ENCODE measurements at regions of chr2 and their contacts with region 1.

Region 1: GRCh38 chr2:203706403-203706802 is at the start of gene CD28:
- DNase-seq: peak; percentile 79 to 97 (median 89)
- ATAC-seq: peak; percentile 81
- H3K4me3 ChIP-seq: peak within 1 kb of the TSS; percentile 63 to 64
- H3K4me3 Mint-ChIP-seq: peak within 1 kb of the TSS; percentile 93
- H3K27ac ChIP-seq: peak within 1 kb of the TSS; percentile 82 to 83
- H3K27ac Mint-ChIP-seq: peak within 1 kb of the TSS; percentile 97
- H3K4me1 ChIP-seq: peaks cover 45% of the 10 kb centered on the region
- H3K4me1 Mint-ChIP-seq: peaks cover 53% of the 10 kb centered on the region
- H3K27me3 ChIP-seq: peaks cover 0 to 2% of the 10 kb centered on the region in 2 experiments
- H3K27me3 Mint-ChIP-seq: no peaks in the 10 kb centered on the region
- CTCF ChIP-seq: no peak
- total RNA-seq, gene CD28: 78.4 to 80.7 TPM

Region 2: GRCh38 chr2:203484266-203485112 is 221.9 kb before region 1 on chr2:
- CTCF ChIA-PET with region 1: interaction called, 4 read pairs
- POLR2A ChIA-PET with region 1: no interaction called
- intact Hi-C with region 1: loop called in 1 of 2 experiments (anchors 10 kb)
- DNase-seq: peak; percentile 27 to 77 (median 48)
- ATAC-seq: peak; percentile 88
- H3K4me3 ChIP-seq: no peak overlapping the region
- H3K4me3 Mint-ChIP-seq: no peak overlapping the region
- H3K27ac ChIP-seq: no peak overlapping the region
- H3K27ac Mint-ChIP-seq: no peak overlapping the region
- H3K4me1 ChIP-seq: peaks cover 4% of the 10 kb centered on the region
- H3K4me1 Mint-ChIP-seq: peaks cover 7% of the 10 kb centered on the region
- H3K27me3 ChIP-seq: no peaks in the 10 kb centered on the region
- H3K27me3 Mint-ChIP-seq: no peaks in the 10 kb centered on the region
- CTCF ChIP-seq: peak; percentile 83

Region 3: DNA sequence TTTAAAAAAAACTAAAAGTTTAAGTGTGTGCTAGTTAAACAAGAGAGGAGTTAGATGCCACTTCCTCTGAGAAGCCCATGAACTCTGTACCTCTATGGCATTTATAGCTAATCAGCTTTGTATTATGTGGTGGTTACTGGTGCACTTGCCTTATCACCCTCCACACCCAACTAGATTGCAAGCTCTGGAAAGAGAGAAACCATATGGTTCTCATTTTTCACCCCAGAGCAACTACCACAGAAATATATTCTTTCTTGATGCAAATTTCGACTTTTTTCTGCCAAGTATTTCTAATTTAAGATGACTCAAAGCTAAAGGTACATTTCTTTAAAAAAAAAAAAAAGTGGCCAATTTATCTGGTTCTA is 195.5 kb before region 1 on chr2:
- CTCF ChIA-PET with region 1: no interaction called
- POLR2A ChIA-PET with region 1: no interaction called
- intact Hi-C with region 1: no loop called
- DNase-seq: no peak
- ATAC-seq: no peak
- H3K4me3 ChIP-seq: no peak overlapping the region
- H3K4me3 Mint-ChIP-seq: no peak overlapping the region
- H3K27ac ChIP-seq: no peak overlapping the region
- H3K27ac Mint-ChIP-seq: no peak overlapping the region
- H3K4me1 ChIP-seq: no peaks in the 10 kb centered on the region
- H3K4me1 Mint-ChIP-seq: no peaks in the 10 kb centered on the region
- H3K27me3 ChIP-seq: no peaks in the 10 kb centered on the region
- H3K27me3 Mint-ChIP-seq: no peaks in the 10 kb centered on the region
- CTCF ChIP-seq: no peak

Region 4: GRCh38 chr2:203718087-203718486 is 11.7 kb after region 1 on chr2:
- CTCF ChIA-PET with region 1: interaction called, 35 read pairs
- POLR2A ChIA-PET with region 1: interaction called, 119 read pairs
- intact Hi-C with region 1: loop called (anchors 1 kb)
- DNase-seq: peak in 7 of 9 experiments; percentile 42 to 83 (median 68)
- ATAC-seq: peak; percentile 42
- H3K4me3 ChIP-seq: peak overlapping the region in 1 of 2 experiments; percentile 10
- H3K4me3 Mint-ChIP-seq: peak overlapping the region; percentile 59
- H3K27ac ChIP-seq: peak overlapping the region; percentile 39 to 57
- H3K27ac Mint-ChIP-seq: peak overlapping the region; percentile 95
- H3K4me1 ChIP-seq: peaks cover 98% of the 10 kb centered on the region
- H3K4me1 Mint-ChIP-seq: peaks cover 98% of the 10 kb centered on the region
- H3K27me3 ChIP-seq: no peaks in the 10 kb centered on the region
- H3K27me3 Mint-ChIP-seq: no peaks in the 10 kb centered on the region
- CTCF ChIP-seq: no peak

Region 5: DNA sequence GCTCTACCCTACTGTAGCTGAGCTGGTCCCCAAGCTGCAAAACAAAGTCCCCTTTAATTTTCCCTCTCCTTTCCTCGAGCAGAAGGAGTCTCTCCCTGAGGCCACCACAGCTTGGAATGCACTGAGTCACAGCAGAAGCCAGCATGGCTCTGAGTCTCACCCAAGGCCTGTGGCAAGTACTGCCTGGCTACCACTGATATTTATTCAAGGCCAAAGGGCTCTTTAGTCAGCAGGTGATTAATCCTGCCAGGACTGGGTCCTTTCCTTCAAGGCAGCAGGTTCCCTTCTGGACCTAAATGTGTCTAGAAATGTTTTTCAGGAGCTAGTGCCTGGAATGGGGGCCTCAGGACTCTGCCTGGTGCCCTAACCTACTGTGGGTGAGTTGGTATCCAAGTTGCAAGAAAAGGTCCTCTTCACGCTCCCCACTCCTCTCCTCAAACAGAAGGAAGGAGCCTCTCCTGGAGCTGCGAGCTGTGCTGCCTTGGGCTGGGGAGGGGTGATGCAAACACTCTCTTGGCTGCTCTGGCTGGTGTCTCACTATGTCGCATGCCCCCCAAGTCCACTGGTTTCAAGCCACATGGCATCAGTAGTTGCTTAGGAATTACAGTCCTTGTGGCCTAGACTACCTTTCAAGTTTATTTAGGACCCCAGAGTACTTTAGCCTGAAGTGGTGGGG is 53.4 kb after region 1 on chr2:
- CTCF ChIA-PET with region 1: no interaction called
- POLR2A ChIA-PET with region 1: no interaction called
- intact Hi-C with region 1: loop called in 1 of 2 experiments (anchors 10 kb)
- DNase-seq: no peak
- ATAC-seq: no peak
- H3K4me3 ChIP-seq: no peak overlapping the region
- H3K4me3 Mint-ChIP-seq: no peak overlapping the region
- H3K27ac ChIP-seq: no peak overlapping the region
- H3K27ac Mint-ChIP-seq: no peak overlapping the region
- H3K4me1 ChIP-seq: peaks cover 22% of the 10 kb centered on the region
- H3K4me1 Mint-ChIP-seq: peaks cover 51% of the 10 kb centered on the region
- H3K27me3 ChIP-seq: no peaks in the 10 kb centered on the region
- H3K27me3 Mint-ChIP-seq: no peaks in the 10 kb centered on the region
- CTCF ChIP-seq: no peak

Region 6: GRCh38 chr2:203804070-203804469 is 97.7 kb after region 1 on chr2:
- CTCF ChIA-PET with region 1: interaction called, 3 read pairs
- POLR2A ChIA-PET with region 1: no interaction called
- intact Hi-C with region 1: loop called in 1 of 2 experiments (anchors 5 kb)
- DNase-seq: peak in 5 of 9 experiments; percentile 12 to 70 (median 53)
- ATAC-seq: peak; percentile 64
- H3K4me3 ChIP-seq: no peak overlapping the region
- H3K4me3 Mint-ChIP-seq: peak overlapping the region; percentile 44
- H3K27ac ChIP-seq: peak overlapping the region in 1 of 2 experiments; percentile 18
- H3K27ac Mint-ChIP-seq: peak overlapping the region; percentile 20
- H3K4me1 ChIP-seq: peaks cover 29% of the 10 kb centered on the region
- H3K4me1 Mint-ChIP-seq: peaks cover 50% of the 10 kb centered on the region
- H3K27me3 ChIP-seq: no peaks in the 10 kb centered on the region
- H3K27me3 Mint-ChIP-seq: no peaks in the 10 kb centered on the region
- CTCF ChIP-seq: no peak